Transverse colon (tissue), 4 donors: ENCODE measurements at regions of chr7 and their contacts with region 1.

Region 1: GRCh38 chr7:90173127-90173844 is 19.0 kb downstream of the STEAP1 start:
- DNase-seq: no peak
- H3K4me3 ChIP-seq: peak overlapping the region in 1 of 4 donors; percentile 25
- H3K27ac ChIP-seq: peak overlapping the region; percentile 12 to 74 (median 66)
- H3K4me1 ChIP-seq: peaks cover 4 to 21% (median 15%) of the 10 kb centered on the region in 4 donors
- H3K27me3 ChIP-seq: no peaks in the 10 kb centered on the region
- CTCF ChIP-seq: no peak
- EP300 ChIP-seq: no peak
- POLR2A ChIP-seq: no peak

Region 2: GRCh38 chr7:89739786-89740185 is 433.5 kb before region 1 on chr7:
- in situ Hi-C with region 1: no loop called
- intact Hi-C with region 1: no loop called
- DNase-seq: no peak
- H3K4me3 ChIP-seq: no peak overlapping the region
- H3K27ac ChIP-seq: no peak overlapping the region
- H3K4me1 ChIP-seq: no peaks in the 10 kb centered on the region
- H3K27me3 ChIP-seq: no peaks in the 10 kb centered on the region
- CTCF ChIP-seq: no peak
- EP300 ChIP-seq: no peak
- POLR2A ChIP-seq: no peak

Region 3: GRCh38 chr7:90262438-90262837 is 89.2 kb after region 1 on chr7:
- in situ Hi-C with region 1: loop called (anchors 10 to 25 kb)
- intact Hi-C with region 1: no loop called
- DNase-seq: no peak
- H3K4me3 ChIP-seq: no peak overlapping the region
- H3K27ac ChIP-seq: no peak overlapping the region
- H3K4me1 ChIP-seq: peaks cover 0 to 5% (median 2%) of the 10 kb centered on the region in 4 donors
- H3K27me3 ChIP-seq: no peaks in the 10 kb centered on the region
- CTCF ChIP-seq: peak; percentile 53 to 67 (median 60)
- EP300 ChIP-seq: no peak
- POLR2A ChIP-seq: no peak

Region 4: DNA sequence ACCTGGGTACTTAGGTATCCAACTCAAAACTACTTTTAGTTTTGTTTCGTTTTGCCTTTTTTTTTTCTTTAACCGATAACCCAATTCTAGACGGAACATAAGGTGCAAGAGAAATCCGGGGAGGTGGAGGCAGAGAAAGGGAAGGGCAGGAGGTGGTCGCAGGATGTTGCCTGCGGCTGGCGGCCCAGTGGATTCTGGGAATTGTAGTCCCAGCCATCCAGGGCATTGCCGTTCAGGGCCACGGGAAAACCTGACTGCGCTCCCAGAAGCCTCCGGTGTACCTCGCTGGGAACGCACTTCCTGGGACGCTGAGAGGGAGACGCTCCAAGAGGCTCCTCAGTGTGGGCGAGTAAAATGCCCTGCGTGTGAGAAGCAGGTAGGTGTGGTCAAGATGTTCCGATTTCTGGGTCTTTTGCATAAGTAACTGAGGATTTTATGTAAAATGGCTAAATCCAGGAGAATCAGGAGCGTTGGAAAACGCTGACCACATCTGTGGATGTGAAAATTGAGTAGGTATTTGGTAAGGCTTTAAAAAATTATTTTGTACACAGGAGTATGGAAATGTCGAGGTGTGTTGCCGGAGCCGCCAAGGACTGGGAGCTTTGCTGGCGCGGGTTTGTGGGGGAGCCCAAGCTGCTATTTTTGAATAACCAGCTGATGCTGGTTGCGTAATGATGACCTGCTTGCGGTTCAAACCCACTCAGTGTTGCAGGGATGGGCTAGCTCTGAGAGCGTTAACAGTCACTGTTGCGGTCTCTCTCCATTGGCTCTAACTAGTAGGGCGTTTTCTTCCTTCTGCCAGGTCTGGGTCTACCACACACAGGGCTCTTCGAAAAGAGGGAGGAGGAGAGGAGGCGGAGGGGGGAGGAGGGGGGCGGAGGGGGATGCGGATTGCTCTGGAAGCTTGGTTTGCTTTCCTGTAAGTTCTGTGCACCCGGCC is 230.2 kb after region 1 on chr7 and contains the start of gene CLDN12:
- in situ Hi-C with region 1: loop called in 2 of 4 experiments (anchors 25 kb)
- intact Hi-C with region 1: no loop called
- DNase-seq: peak; percentile 89
- H3K4me3 ChIP-seq: peak within 1 kb of the TSS; percentile 19 to 67 (median 56)
- H3K27ac ChIP-seq: peak within 1 kb of the TSS; percentile 86 to 95 (median 90)
- H3K4me1 ChIP-seq: peaks cover 4 to 27% (median 13%) of the 10 kb centered on the region in 4 donors
- H3K27me3 ChIP-seq: no peaks in the 10 kb centered on the region
- CTCF ChIP-seq: peak in 2 of 5 experiments; percentile 23 to 24
- EP300 ChIP-seq: peak; percentile 19
- POLR2A ChIP-seq: peak; percentile 93
- total RNA-seq, gene CLDN12: 4.2 to 42.2 (median 33.6) TPM